ENCODE measurements at regions of chr6 and their contacts with region 1.

Region 1: DNA sequence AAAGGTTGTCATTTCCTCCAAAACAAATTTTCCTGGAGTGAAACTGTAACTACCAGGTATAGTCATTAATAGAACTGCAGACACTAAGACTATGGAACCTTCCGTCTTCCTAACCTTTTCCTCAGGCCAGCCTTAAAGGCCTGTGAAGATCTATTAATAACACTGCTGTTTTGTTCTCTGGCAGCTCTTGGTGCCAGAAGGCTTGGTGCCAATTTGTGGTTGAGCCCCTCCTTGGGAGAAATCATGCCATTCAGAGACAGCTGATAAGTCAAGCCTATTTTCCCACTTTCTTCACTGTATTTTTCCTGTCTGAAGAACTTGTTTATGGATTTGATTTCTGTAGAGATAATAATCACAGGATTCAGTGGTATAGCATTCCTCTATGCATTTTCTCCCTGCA is 64.8 kb downstream of the HCRTR2 start:
- DNase-seq: no peak
- H3K4me3 ChIP-seq: no peak overlapping the region
- H3K27ac ChIP-seq: no peak overlapping the region
- H3K4me1 ChIP-seq: peaks cover 0 to 4% (median 0%) of the 10 kb centered on the region in 4 donors
- H3K27me3 ChIP-seq: no peaks in the 10 kb centered on the region
- CTCF ChIP-seq: no peak
- EP300 ChIP-seq: no peak
- POLR2A ChIP-seq: no peak

Region 2: DNA sequence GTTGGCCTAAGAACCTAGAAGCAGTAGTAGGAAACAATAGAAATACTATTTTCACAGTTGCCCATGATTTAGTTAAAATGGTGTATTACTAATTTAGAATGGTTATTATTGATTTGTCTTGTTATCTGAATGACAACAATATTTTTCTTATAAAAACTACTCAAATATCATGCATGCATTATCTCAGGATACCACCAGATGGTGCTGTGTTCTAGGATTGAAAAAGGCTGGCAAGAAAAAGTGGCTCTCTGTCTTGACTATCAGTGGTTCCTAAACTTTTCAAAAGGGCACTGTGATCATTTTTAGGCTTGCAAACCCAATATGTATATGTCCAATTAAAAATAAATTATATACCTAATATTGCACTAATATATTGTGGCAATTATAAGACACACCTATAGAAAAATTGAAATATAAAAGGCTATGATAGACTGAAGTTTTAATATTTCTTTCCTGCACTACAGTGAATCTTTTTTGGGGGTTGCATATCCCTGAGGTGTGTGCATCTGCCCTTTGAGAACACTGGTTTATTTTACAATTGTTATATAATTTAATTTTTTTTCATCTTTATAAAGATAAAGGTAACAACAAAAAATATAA is 1259.5 kb before region 1 on chr6:
- intact Hi-C with region 1: loop called (anchors 5 kb)
- DNase-seq: no peak
- H3K4me3 ChIP-seq: no peak overlapping the region
- H3K27ac ChIP-seq: no peak overlapping the region
- H3K4me1 ChIP-seq: no peaks in the 10 kb centered on the region
- H3K27me3 ChIP-seq: no peaks in the 10 kb centered on the region
- CTCF ChIP-seq: peak; percentile 72 to 84 (median 84)
- EP300 ChIP-seq: no peak
- POLR2A ChIP-seq: no peak

Region 3: GRCh38 chr6:55212156-55212555 is 26.9 kb before region 1 on chr6:
- intact Hi-C with region 1: no loop called
- DNase-seq: no peak
- H3K4me3 ChIP-seq: no peak overlapping the region
- H3K27ac ChIP-seq: no peak overlapping the region
- H3K4me1 ChIP-seq: no peaks in the 10 kb centered on the region
- H3K27me3 ChIP-seq: no peaks in the 10 kb centered on the region
- CTCF ChIP-seq: no peak
- EP300 ChIP-seq: no peak
- POLR2A ChIP-seq: no peak

Region 4: DNA sequence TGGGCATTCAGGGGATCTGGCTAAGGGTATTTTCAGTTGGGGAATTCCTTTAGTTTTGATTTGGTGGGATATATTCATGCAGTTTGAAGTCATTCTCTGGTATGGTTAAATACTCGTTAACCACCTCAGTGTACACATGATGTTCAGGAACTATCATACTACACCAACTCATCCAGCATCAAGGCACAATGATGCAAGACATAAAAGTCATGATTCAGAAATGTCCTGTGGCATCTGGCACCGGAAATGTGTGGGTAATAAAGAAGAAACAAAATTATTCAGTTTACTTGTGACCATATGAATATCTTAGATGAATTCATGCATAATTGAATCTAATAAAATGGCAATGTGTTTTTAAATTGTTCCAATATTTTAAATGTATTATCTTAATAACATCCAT is 765.3 kb after region 1 on chr6:
- intact Hi-C with region 1: no loop called
- DNase-seq: no peak
- H3K4me3 ChIP-seq: no peak overlapping the region
- H3K27ac ChIP-seq: no peak overlapping the region
- H3K4me1 ChIP-seq: peaks cover 0 to 5% (median 0%) of the 10 kb centered on the region in 4 donors
- H3K27me3 ChIP-seq: no peaks in the 10 kb centered on the region
- CTCF ChIP-seq: no peak
- EP300 ChIP-seq: no peak
- POLR2A ChIP-seq: no peak

Measured in esophagus muscularis mucosa (tissue), 4 donors.